Mammary epithelial cell (primary cell): ENCODE measurements at regions of chr6 and their contacts with region 1.

Region 1: GRCh38 chr6:54018722-54019121 is 92.5 kb upstream of the MLIP start:
- DNase-seq: no peak
- H3K4me3 ChIP-seq: no peak overlapping the region
- H3K27ac ChIP-seq: no peak overlapping the region
- H3K4me1 ChIP-seq: no peaks in the 10 kb centered on the region
- H3K27me3 ChIP-seq: no peaks in the 10 kb centered on the region
- CTCF ChIP-seq: no peak

Region 2: GRCh38 chr6:53703047-53703446 is 315.7 kb before region 1 on chr6:
- CTCF ChIA-PET with region 1: no interaction called
- dilution Hi-C with region 1: no loop called
- in situ Hi-C with region 1: no loop called
- intact Hi-C with region 1: no loop called
- DNase-seq: no peak
- H3K4me3 ChIP-seq: no peak overlapping the region
- H3K27ac ChIP-seq: no peak overlapping the region
- H3K4me1 ChIP-seq: no peaks in the 10 kb centered on the region
- H3K27me3 ChIP-seq: no peaks in the 10 kb centered on the region
- CTCF ChIP-seq: no peak

Region 3: DNA sequence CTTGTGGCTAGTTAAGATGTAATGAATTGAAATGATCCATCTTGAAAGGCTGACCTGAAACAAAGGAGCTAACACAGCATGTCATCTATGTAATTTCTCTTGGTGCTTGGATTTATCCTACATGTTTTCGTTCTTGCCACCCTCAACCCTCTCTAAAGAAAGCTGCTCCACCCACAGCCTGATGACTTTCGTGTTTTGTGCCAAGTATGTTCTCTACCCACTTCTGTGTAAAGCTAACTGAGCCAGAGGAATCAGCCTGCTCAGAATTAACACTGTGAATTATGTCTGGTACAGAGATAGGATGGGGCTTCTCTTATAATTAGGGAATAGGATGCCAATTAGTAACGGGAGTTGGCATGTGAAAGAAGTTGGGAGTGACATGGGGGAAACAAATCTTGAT is 24.6 kb after region 1 on chr6:
- CTCF ChIA-PET with region 1: no interaction called
- dilution Hi-C with region 1: no loop called
- in situ Hi-C with region 1: no loop called
- intact Hi-C with region 1: no loop called
- DNase-seq: no peak
- H3K4me3 ChIP-seq: no peak overlapping the region
- H3K27ac ChIP-seq: no peak overlapping the region
- H3K4me1 ChIP-seq: no peaks in the 10 kb centered on the region
- H3K27me3 ChIP-seq: no peaks in the 10 kb centered on the region
- CTCF ChIP-seq: no peak

Region 4: DNA sequence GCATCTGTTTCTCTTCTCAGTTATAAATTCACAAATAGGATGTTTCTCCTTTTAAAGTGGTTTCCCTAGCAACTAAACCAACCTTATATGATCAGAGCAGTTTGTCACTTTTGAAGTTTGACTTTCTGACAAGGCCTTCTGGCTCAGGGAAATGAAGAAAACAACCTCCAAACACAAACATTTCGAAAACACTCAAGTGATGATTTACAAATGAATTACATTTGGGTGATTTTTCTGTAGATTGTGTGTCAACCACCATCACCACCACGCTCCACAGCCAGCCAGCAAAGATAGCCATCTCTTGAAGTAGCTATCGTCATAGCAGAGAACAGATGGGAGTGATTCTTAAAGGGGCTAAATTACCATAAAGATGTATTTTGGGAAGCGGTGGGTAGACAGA is 76.1 kb after region 1 on chr6:
- CTCF ChIA-PET with region 1: no interaction called
- dilution Hi-C with region 1: loop called (anchors 5 kb)
- in situ Hi-C with region 1: no loop called
- intact Hi-C with region 1: no loop called
- DNase-seq: no peak
- H3K4me3 ChIP-seq: no peak overlapping the region
- H3K27ac ChIP-seq: no peak overlapping the region
- H3K4me1 ChIP-seq: no peaks in the 10 kb centered on the region
- H3K27me3 ChIP-seq: peaks cover 6% of the 10 kb centered on the region
- CTCF ChIP-seq: no peak

Region 5: GRCh38 chr6:54115966-54116365 is 97.2 kb after region 1 on chr6:
- CTCF ChIA-PET with region 1: no interaction called
- dilution Hi-C with region 1: loop called (anchors 5 kb)
- in situ Hi-C with region 1: no loop called
- intact Hi-C with region 1: no loop called
- DNase-seq: peak; percentile 11
- H3K4me3 ChIP-seq: no peak overlapping the region
- H3K27ac ChIP-seq: peak overlapping the region; percentile 3
- H3K4me1 ChIP-seq: peaks cover 10% of the 10 kb centered on the region
- H3K27me3 ChIP-seq: no peaks in the 10 kb centered on the region
- CTCF ChIP-seq: no peak